Endothelial cell of umbilical vein (primary cell): ENCODE measurements at regions of chr10 and their contacts with region 1.

Region 1: GRCh38 chr10:21495752-21496342 is 29.6 kb downstream of the SKIDA1 start:
- DNase-seq: peak; percentile 88
- H3K4me3 ChIP-seq: peak overlapping the region; percentile 79 to 94 (median 86)
- H3K27ac ChIP-seq: peak overlapping the region; percentile 49
- H3K4me1 ChIP-seq: peaks cover 12% of the 10 kb centered on the region
- H3K27me3 ChIP-seq: peaks cover 9 to 29% of the 10 kb centered on the region in 2 experiments
- CTCF ChIP-seq: peak; percentile 88 to 95
- POLR2A ChIP-seq: peak; percentile 64

Region 2: GRCh38 chr10:21278491-21279239 is 217.2 kb before region 1 on chr10:
- CTCF ChIA-PET with region 1: interaction called, 125 read pairs
- POLR2A ChIA-PET with region 1: interaction called, 3 read pairs
- dilution Hi-C with region 1: no loop called
- intact Hi-C with region 1: loop called (anchors 1 kb)
- DNase-seq: peak; percentile 90
- H3K4me3 ChIP-seq: no peak overlapping the region
- H3K27ac ChIP-seq: no peak overlapping the region
- H3K4me1 ChIP-seq: peaks cover 2% of the 10 kb centered on the region
- H3K27me3 ChIP-seq: no peaks in the 10 kb centered on the region
- CTCF ChIP-seq: peak; percentile 73 to 77
- POLR2A ChIP-seq: no peak

Region 3: GRCh38 chr10:21311426-21311825 is 184.4 kb before region 1 on chr10:
- CTCF ChIA-PET with region 1: no interaction called
- POLR2A ChIA-PET with region 1: no interaction called
- dilution Hi-C with region 1: no loop called
- intact Hi-C with region 1: no loop called
- DNase-seq: no peak
- H3K4me3 ChIP-seq: no peak overlapping the region
- H3K27ac ChIP-seq: no peak overlapping the region
- H3K4me1 ChIP-seq: peaks cover 21% of the 10 kb centered on the region
- H3K27me3 ChIP-seq: no peaks in the 10 kb centered on the region
- CTCF ChIP-seq: no peak
- POLR2A ChIP-seq: no peak

Region 4: GRCh38 chr10:21364196-21365114 is 131.4 kb before region 1 on chr10:
- CTCF ChIA-PET with region 1: no interaction called
- POLR2A ChIA-PET with region 1: no interaction called
- dilution Hi-C with region 1: no loop called
- intact Hi-C with region 1: loop called (anchors 1 kb)
- DNase-seq: peak; percentile 97
- H3K4me3 ChIP-seq: no peak overlapping the region
- H3K27ac ChIP-seq: peak overlapping the region; percentile 96
- H3K4me1 ChIP-seq: peaks cover 40% of the 10 kb centered on the region
- H3K27me3 ChIP-seq: no peaks in the 10 kb centered on the region
- CTCF ChIP-seq: no peak
- POLR2A ChIP-seq: no peak

Region 5: DNA sequence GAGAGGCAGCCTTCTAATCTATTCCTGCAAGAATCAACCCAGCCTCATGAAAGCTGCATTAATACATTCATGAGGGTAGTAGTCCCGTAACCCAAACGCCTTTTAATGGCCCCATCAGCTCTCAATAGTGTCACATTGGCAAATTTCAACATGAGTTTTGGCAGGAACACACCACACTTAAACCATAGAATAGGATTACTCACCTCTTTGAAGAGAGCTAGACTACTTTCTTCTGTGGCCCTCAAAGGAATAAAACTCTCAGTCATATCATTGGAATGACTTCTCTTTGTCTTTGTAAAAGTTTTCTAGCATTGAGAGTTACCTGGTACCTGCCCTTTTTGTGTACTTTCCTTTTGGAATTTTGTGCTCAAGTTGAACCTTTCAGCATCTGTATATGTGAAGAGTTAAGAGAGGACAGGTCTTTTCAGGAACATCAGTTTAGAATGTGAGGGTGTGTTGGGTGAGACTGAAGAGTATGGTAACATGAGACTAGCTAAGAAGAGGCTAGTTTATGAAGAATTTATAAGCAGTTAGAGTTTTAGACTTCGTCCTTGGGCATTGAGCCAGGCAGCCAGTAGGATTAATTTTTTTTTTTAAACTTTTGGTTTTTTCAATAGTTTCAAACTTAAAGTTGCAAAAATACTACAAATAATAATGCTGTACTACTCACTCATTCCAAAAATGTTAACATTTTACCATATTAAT is 130.8 kb after region 1 on chr10:
- CTCF ChIA-PET with region 1: no interaction called
- POLR2A ChIA-PET with region 1: no interaction called
- dilution Hi-C with region 1: no loop called
- intact Hi-C with region 1: no loop called
- DNase-seq: no peak
- H3K4me3 ChIP-seq: no peak overlapping the region
- H3K27ac ChIP-seq: no peak overlapping the region
- H3K4me1 ChIP-seq: no peaks in the 10 kb centered on the region
- H3K27me3 ChIP-seq: no peaks in the 10 kb centered on the region
- CTCF ChIP-seq: no peak
- POLR2A ChIP-seq: no peak

Region 6: GRCh38 chr10:21675157-21675796 is 179.4 kb after region 1 on chr10:
- CTCF ChIA-PET with region 1: no interaction called
- POLR2A ChIA-PET with region 1: no interaction called
- dilution Hi-C with region 1: no loop called
- intact Hi-C with region 1: loop called (anchors 5 kb)
- DNase-seq: peak; percentile 42
- H3K4me3 ChIP-seq: no peak overlapping the region
- H3K27ac ChIP-seq: no peak overlapping the region
- H3K4me1 ChIP-seq: no peaks in the 10 kb centered on the region
- H3K27me3 ChIP-seq: no peaks in the 10 kb centered on the region
- CTCF ChIP-seq: peak; percentile 71 to 73
- POLR2A ChIP-seq: no peak

Region 7: DNA sequence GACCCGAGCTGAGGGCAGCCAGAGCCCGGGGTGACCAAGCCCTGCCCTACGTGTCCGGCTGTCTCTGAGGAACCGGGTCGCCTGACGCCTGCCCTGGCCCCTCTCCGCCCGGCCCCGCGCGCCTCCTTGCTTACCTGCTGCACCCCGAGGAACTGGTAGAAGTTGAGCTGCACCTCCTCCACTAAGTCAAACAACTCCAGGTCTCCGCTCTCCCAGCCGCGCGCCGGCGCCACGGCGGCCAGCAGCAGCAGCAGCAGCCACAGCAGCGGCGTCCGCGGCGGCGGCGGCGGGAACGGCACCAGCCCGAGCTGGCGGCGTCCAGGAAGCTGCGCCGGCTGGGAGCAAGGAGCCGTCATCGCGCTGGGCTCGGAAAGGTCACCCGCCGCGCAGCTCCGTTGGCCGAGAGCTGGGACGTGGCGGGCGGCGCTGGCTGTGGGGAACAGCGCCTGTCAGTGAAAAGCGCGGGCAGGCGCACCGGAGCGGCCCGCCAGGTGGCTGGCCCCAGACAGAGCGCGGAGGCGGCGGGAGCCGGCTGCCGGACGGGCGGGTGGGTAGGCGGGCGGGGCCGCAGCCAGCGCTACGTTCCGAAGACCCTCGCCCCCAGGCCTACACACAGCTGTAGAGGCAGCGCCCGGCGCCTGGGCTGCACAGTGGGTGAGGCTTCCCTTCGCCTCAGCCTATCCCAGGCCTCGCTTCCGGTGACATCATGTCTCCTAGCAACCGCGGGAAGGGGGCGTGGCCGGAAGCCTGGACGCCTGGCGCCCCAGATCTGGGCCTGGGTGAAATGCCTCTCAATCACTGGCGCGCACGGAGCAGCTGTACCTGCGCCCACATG is 507.4 kb after region 1 on chr10 and contains the start of gene DNAJC1:
- CTCF ChIA-PET with region 1: interaction called, 11 read pairs
- POLR2A ChIA-PET with region 1: no interaction called
- dilution Hi-C with region 1: no loop called
- intact Hi-C with region 1: loop called (anchors 2 kb)
- DNase-seq: peak; percentile 95
- H3K4me3 ChIP-seq: peak within 1 kb of the TSS; percentile 47 to 93 (median 86)
- H3K27ac ChIP-seq: peak within 1 kb of the TSS; percentile 86
- H3K4me1 ChIP-seq: peaks cover 10% of the 10 kb centered on the region
- H3K27me3 ChIP-seq: peaks cover 3 to 27% of the 10 kb centered on the region in 2 experiments
- CTCF ChIP-seq: no peak
- POLR2A ChIP-seq: peak; percentile 80
- total RNA-seq, gene DNAJC1: 19.7 and 22.5 TPM in 2 replicates

Region 8: DNA sequence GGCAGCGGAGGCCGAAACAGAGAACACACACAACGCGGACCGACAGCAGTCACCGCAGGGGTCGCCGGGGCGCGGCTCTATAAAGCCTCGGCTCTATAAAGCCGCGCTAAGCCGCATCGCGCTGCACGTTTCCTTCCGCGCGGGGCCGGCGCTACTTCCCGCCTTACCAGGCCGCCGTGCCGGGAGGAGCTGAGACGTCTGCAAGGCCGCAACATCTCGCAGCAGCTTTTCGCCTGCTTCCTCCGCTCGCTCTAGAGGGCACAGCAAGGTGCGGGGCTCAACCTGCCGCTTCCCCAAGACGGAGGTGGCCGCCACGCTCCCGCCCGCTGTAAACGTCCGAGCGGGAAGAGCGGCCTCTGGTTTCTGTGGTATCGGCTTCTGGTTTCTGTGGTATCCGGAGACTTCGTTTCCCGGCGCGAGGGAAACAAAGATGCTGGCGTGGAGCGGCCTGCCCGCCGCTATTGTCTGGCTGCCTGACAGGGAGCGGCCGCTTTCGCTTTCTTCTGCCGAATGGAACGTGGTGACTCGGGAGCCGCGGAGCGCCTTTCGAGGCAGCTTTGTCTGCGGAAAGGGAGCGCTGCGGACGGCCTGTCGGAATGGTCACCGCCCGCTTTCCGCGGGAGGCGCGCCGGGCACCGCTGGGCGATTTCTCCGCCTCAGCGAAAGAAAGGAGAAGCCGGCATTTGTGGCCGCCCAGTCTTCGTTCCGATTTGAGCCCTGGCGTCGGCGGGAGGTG is 941.2 kb after region 1 on chr10:
- CTCF ChIA-PET with region 1: no interaction called
- POLR2A ChIA-PET with region 1: no interaction called
- dilution Hi-C with region 1: no loop called
- intact Hi-C with region 1: loop called (anchors 5 kb)
- DNase-seq: peak; percentile 91
- H3K4me3 ChIP-seq: peak overlapping the region; percentile 66 to 74 (median 69)
- H3K27ac ChIP-seq: peak overlapping the region; percentile 94
- H3K4me1 ChIP-seq: peaks cover 27% of the 10 kb centered on the region
- H3K27me3 ChIP-seq: peaks cover 2 to 14% of the 10 kb centered on the region in 2 experiments
- CTCF ChIP-seq: peak; percentile 7 to 36
- POLR2A ChIP-seq: peak; percentile 93